HAP-1 (cell line): ENCODE measurements at regions of chr2 and their contacts with region 1.

Region 1: DNA sequence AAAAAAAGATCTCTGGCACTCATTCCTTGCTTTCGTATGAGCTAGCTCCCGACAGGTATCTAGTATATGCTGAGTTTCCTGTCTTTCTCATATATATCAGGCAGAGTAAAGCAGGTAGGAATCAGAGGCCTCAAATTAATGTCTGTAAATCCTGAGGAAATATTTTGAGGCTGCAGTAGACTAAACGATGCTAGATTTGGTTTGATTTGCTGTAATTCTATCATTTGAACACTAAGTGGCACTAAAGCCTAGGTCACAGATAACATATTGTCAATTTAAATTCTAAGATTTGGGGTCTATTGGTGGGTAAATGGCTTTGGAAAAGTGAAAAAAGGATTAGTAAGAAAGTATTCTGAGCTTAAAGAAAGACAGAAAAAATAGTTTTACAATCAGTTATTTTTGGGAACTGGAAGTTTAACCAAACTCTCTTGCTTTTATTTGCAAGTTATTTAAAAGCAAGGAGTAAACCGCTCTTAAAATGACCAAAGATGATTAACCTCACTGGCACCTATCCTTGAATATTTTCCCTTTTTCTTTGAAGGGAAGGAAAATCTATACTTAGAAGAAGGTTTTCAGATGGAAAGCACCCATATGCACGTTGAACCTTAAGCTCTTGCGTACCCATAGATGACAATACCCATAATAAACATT is 37.6 kb upstream of the SLC4A10 start:
- DNase-seq: peak in 1 of 2 experiments; percentile 15
- H3K4me3 ChIP-seq: no peak overlapping the region
- H3K4me1 ChIP-seq: no peaks in the 10 kb centered on the region
- H3K27me3 ChIP-seq: no peaks in the 10 kb centered on the region

Region 2: DNA sequence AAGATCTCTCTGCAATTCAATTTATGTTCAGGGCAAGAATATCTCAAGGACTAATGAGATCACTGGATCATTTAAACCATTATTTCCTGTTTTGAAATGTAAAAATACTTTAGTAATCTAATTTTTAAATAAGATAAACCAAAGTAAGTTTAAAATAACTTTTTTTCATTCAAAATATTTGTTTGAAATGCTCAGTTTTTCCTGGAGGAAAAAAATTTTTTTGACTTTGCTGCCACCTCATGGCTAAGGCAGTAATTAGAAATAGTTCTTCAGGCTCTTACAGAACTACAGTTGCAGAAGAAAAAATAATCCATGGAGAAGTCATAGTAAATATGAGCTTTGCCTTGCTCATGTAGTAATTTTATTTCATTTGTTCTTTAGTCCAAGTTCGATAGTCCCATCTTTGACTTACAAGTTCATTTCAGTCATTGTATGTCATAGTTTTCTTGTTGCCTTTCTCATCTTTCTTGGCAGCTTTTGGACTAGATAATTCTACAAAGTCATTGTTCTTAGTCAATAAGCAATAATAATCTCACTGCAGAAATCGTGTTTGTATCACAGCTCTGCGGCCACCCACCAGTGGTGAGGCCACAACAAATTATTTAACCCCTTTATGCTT is 360.0 kb after region 1 on chr2:
- in situ Hi-C with region 1: loop called (anchors 10 kb)
- DNase-seq: no peak
- H3K4me3 ChIP-seq: no peak overlapping the region
- H3K4me1 ChIP-seq: no peaks in the 10 kb centered on the region
- H3K27me3 ChIP-seq: no peaks in the 10 kb centered on the region; the same call in 1 of the 2 replicates

Region 3: DNA sequence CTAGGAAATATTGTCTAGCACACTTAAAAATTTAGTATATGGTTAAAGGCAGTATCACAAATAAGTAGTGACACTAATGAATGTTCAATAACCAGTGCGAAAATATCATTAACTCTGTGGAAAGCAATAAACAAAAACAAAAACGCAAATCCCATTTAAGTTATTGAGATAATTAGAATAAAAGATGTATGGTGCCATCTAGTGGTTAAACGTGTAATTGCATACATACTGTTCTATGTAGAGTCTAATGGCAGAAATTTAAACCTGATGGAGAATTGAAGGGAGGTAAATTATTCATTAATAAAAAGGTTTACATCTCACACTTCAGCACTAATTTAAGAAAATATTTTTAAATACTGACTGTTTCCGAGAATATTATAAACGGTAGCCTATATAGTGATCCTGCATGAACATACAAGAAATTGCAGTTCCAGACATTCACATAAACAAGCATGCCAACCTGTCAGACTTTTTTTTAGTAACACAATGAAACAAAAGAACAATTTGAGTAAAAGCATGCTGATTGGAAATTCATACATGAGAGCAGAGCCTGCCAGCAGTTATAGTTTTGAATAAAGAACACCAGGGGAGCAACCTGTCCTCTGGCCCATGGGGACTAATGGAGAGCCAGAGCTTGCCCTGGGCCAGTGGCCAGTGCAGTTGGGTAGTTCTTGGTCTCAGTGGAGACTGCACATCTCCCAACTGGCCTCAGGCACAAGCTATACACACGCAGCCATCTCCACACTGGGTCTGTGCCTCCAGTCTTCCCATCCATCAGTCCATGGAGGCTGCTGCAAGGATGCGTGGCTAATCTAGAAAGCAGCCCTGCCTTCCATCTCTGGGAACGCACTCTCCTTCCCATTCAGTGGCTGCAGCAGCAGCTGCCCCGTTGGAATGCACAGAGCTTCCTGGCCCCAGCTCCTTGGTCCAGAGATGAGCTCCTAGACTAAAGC is 537.4 kb after region 1 on chr2:
- in situ Hi-C with region 1: loop called (anchors 25 kb)
- DNase-seq: peak in 1 of 2 experiments; percentile 43
- H3K4me3 ChIP-seq: no peak overlapping the region
- H3K4me1 ChIP-seq: no peaks in the 10 kb centered on the region
- H3K27me3 ChIP-seq: no peaks in the 10 kb centered on the region

Region 4: GRCh38 chr2:162184821-162185446 is 598.3 kb after region 1 on chr2:
- in situ Hi-C with region 1: no loop called
- DNase-seq: no peak
- H3K4me3 ChIP-seq: no peak overlapping the region
- H3K4me1 ChIP-seq: no peaks in the 10 kb centered on the region
- H3K27me3 ChIP-seq: peaks cover 3% of the 10 kb centered on the region